ENCODE measurements at regions of chr3 and their contacts with region 1.

Region 1: GRCh38 chr3:174440741-174441587 is 418.2 kb upstream of the NAALADL2 start:
- DNase-seq: peak; percentile 93 to 96
- H3K4me3 ChIP-seq: peak overlapping the region; percentile 50
- H3K4me3 Mint-ChIP-seq: no peak overlapping the region
- H3K27ac Mint-ChIP-seq: peak overlapping the region; percentile 78
- H3K4me1 ChIP-seq: peaks cover 18% of the 10 kb centered on the region
- H3K4me1 Mint-ChIP-seq: peaks cover 24% of the 10 kb centered on the region
- H3K27me3 ChIP-seq: no peaks in the 10 kb centered on the region
- H3K27me3 Mint-ChIP-seq: no peaks in the 10 kb centered on the region
- CTCF ChIP-seq: peak in 1 of 2 experiments; percentile 25

Region 2: DNA sequence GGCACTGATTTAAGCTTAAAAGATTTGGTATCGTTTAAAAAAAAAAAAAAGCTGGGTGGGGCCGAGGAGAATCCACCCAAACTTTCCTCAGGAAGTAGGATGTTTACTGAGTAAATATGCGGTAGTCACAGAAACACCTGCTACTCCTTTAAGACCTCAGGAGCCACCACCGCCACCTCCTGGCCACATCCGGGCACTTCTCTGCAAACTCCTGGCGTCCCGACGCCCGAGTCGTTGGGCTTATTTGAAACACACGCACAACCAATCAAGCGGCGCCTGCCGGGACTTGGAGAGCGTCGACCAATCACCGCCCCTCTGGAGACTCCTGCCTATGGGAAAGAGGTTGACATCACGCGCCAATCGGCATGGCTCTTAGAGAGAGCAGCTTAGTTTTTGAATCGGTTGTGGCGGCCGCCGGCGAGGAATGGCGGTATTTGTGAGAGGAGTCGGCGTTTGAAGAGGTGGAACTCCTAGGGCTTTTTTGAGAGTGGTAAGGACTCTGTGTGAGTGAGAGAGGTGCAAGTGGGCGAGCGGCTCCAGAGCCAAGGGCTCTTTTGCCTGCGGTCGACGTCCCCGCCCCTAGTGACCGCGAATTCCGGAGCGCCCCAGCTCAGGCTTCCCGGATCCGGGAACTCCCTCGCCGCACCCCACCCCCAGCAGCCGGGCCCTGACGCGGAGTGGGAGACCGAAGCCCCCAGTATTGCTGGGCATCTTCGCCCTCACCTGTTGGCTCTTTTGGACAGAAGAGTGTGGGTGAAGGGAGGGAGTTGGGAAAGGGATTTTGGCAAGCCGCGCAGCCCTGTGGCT is 1690.4 kb before region 1 on chr3 and contains the start of gene ECT2:
- CTCF ChIA-PET with region 1: no interaction called
- POLR2A ChIA-PET with region 1: no interaction called
- intact Hi-C with region 1: loop called (anchors 2 kb)
- DNase-seq: peak; percentile 97 to 99
- H3K4me3 ChIP-seq: peak within 1 kb of the TSS; percentile 71
- H3K4me3 Mint-ChIP-seq: peak within 1 kb of the TSS; percentile 79
- H3K27ac Mint-ChIP-seq: peak within 1 kb of the TSS; percentile 96
- H3K4me1 ChIP-seq: peaks cover 25% of the 10 kb centered on the region
- H3K4me1 Mint-ChIP-seq: peaks cover 33% of the 10 kb centered on the region
- H3K27me3 ChIP-seq: no peaks in the 10 kb centered on the region
- H3K27me3 Mint-ChIP-seq: no peaks in the 10 kb centered on the region
- CTCF ChIP-seq: peak; percentile 50 to 75
- total RNA-seq, gene ECT2: 66.6 and 68.0 TPM in 2 replicates

Region 3: GRCh38 chr3:174355505-174355904 is 85.5 kb before region 1 on chr3:
- CTCF ChIA-PET with region 1: interaction called, 6 read pairs
- POLR2A ChIA-PET with region 1: interaction called, 3 read pairs
- intact Hi-C with region 1: loop called (anchors 1 kb)
- DNase-seq: peak in 1 of 2 experiments; percentile 34
- H3K4me3 ChIP-seq: no peak overlapping the region
- H3K4me3 Mint-ChIP-seq: no peak overlapping the region
- H3K27ac Mint-ChIP-seq: no peak overlapping the region
- H3K4me1 ChIP-seq: no peaks in the 10 kb centered on the region
- H3K4me1 Mint-ChIP-seq: no peaks in the 10 kb centered on the region
- H3K27me3 ChIP-seq: no peaks in the 10 kb centered on the region
- H3K27me3 Mint-ChIP-seq: no peaks in the 10 kb centered on the region
- CTCF ChIP-seq: peak; percentile 16 to 47

Region 4: GRCh38 chr3:174413057-174413912 is 27.7 kb before region 1 on chr3:
- CTCF ChIA-PET with region 1: interaction called, 3 read pairs
- POLR2A ChIA-PET with region 1: interaction called, 24 read pairs
- intact Hi-C with region 1: loop called (anchors 1 kb)
- DNase-seq: peak in 1 of 2 experiments; percentile 56
- H3K4me3 ChIP-seq: no peak overlapping the region
- H3K4me3 Mint-ChIP-seq: peak overlapping the region; percentile 32
- H3K27ac Mint-ChIP-seq: peak overlapping the region; percentile 66
- H3K4me1 ChIP-seq: peaks cover 29% of the 10 kb centered on the region
- H3K4me1 Mint-ChIP-seq: peaks cover 31% of the 10 kb centered on the region
- H3K27me3 ChIP-seq: no peaks in the 10 kb centered on the region
- H3K27me3 Mint-ChIP-seq: no peaks in the 10 kb centered on the region
- CTCF ChIP-seq: no peak

Region 5: GRCh38 chr3:174547801-174548435 is 107.0 kb after region 1 on chr3:
- CTCF ChIA-PET with region 1: no interaction called
- POLR2A ChIA-PET with region 1: no interaction called
- intact Hi-C with region 1: loop called (anchors 5 kb)
- DNase-seq: no peak
- H3K4me3 ChIP-seq: no peak overlapping the region
- H3K4me3 Mint-ChIP-seq: no peak overlapping the region
- H3K27ac Mint-ChIP-seq: no peak overlapping the region
- H3K4me1 ChIP-seq: peaks cover 31% of the 10 kb centered on the region
- H3K4me1 Mint-ChIP-seq: peaks cover 25% of the 10 kb centered on the region
- H3K27me3 ChIP-seq: no peaks in the 10 kb centered on the region
- H3K27me3 Mint-ChIP-seq: no peaks in the 10 kb centered on the region
- CTCF ChIP-seq: no peak

Region 6: GRCh38 chr3:174775587-174775986 is 334.6 kb after region 1 on chr3:
- CTCF ChIA-PET with region 1: no interaction called
- POLR2A ChIA-PET with region 1: no interaction called
- intact Hi-C with region 1: loop called (anchors 1 kb)
- DNase-seq: peak; percentile 55 to 67
- H3K4me3 ChIP-seq: no peak overlapping the region
- H3K4me3 Mint-ChIP-seq: no peak overlapping the region
- H3K27ac Mint-ChIP-seq: peak overlapping the region; percentile 6
- H3K4me1 ChIP-seq: peaks cover 14% of the 10 kb centered on the region
- H3K4me1 Mint-ChIP-seq: no peaks in the 10 kb centered on the region
- H3K27me3 ChIP-seq: no peaks in the 10 kb centered on the region
- H3K27me3 Mint-ChIP-seq: no peaks in the 10 kb centered on the region
- CTCF ChIP-seq: no peak

Region 7: GRCh38 chr3:174955513-174956001 is 514.6 kb after region 1 on chr3:
- CTCF ChIA-PET with region 1: no interaction called
- POLR2A ChIA-PET with region 1: no interaction called
- intact Hi-C with region 1: loop called (anchors 1 kb)
- DNase-seq: peak; percentile 65 to 73
- H3K4me3 ChIP-seq: no peak overlapping the region
- H3K4me3 Mint-ChIP-seq: no peak overlapping the region
- H3K27ac Mint-ChIP-seq: peak overlapping the region; percentile 70
- H3K4me1 ChIP-seq: peaks cover 19% of the 10 kb centered on the region
- H3K4me1 Mint-ChIP-seq: peaks cover 30% of the 10 kb centered on the region
- H3K27me3 ChIP-seq: no peaks in the 10 kb centered on the region
- H3K27me3 Mint-ChIP-seq: no peaks in the 10 kb centered on the region
- CTCF ChIP-seq: no peak

Measured in Caco-2 (cell line).